HepG2 (cell line): ENCODE measurements at regions of chr3 and their contacts with region 1.

Region 1: DNA sequence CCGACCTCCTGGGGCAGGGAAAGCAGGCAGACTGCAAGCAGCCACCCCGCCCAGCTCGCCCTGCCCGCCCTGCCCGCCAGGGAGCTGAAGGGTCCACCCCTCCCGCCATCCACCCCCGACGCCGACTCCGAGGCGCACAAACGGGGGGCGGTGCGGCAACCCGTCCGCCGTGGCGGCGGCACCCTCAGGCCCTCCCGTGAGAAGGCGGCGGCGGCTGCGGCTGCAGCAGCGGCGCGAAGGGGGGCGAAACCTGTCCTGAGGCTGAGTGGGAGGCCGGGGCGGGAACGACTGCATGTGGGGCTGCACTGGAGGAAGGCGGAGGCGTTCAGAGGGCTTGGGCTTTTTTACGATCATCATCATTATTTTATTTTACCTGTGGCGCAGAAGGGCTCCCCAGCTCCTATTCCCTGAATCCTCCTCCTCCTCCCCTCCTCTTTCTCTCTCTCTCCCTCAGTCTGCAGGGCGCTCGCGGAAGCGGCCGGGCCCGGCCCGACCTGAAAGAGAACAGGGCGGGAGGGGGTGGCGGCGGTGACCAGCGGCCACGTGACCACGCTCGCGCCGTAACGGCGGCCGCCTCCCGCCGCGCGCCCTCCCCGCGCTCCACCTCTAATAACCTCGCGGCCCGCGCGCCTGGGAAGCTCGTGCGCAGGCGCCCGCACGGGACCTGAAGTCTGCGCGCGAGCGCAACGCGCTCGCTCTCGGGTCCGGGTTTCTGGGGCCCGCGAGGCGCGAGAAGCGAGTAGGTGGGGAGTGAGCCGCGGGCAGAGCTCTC is at the start of gene TBC1D5:
- DNase-seq: peak; percentile 94
- ATAC-seq: peak; percentile 88
- H3K4me3 ChIP-seq: peak within 1 kb of the TSS; percentile 79 to 88 (median 79)
- H3K27ac ChIP-seq: peak within 1 kb of the TSS; percentile 98
- H3K4me1 ChIP-seq: peaks cover 60% of the 10 kb centered on the region
- H3K27me3 ChIP-seq: no peaks in the 10 kb centered on the region; a peak in 1 of 5 replicates
- CTCF ChIP-seq: no peak; the same call in 1 of the 2 replicates
- EP300 ChIP-seq: 0 out of 4 replicates have a peak, but pooled peaks of 1 of the 2 experiments have one; percentile 11
- POLR2A ChIP-seq: peak; percentile 78
- RAD21 ChIP-seq: peak; percentile 27; the same call in 1 of the 2 replicates
- total RNA-seq, gene TBC1D5: 33.3 and 50.5 TPM in 2 replicates

Region 2: GRCh38 chr3:17515445-17516234 is 226.7 kb before region 1 on chr3:
- CTCF ChIA-PET with region 1: no interaction called
- POLR2A ChIA-PET with region 1: no interaction called
- in situ Hi-C with region 1: no loop called
- intact Hi-C with region 1: loop called (anchors 1 kb)
- DNase-seq: no peak
- ATAC-seq: no peak
- H3K4me3 ChIP-seq: no peak overlapping the region
- H3K27ac ChIP-seq: no peak overlapping the region
- H3K4me1 ChIP-seq: no peaks in the 10 kb centered on the region
- H3K27me3 ChIP-seq: no peaks in the 10 kb centered on the region
- CTCF ChIP-seq: no peak
- EP300 ChIP-seq: no peak
- POLR2A ChIP-seq: no peak
- RAD21 ChIP-seq: no peak

Region 3: DNA sequence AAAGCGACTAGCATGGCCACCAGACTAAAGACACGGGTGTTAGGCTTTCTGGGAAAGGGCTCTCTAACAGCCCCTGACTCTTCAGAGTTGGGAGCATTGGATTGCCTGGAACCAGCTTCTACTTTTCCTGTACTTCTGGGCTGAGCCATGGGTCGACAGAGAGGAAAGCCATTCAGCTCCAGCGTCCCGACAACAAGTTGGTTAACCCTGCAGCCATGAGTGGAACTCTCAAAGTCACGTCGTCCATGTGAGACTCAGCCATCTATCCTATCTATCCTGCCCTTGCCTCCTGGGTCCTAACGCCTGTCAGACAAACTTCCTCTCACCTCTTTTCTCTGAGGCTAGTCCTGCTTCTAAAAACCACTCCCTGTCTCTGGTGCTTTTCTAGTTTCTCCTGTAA is 32.8 kb after region 1 on chr3:
- CTCF ChIA-PET with region 1: no interaction called
- POLR2A ChIA-PET with region 1: interaction called, 3 read pairs
- in situ Hi-C with region 1: no loop called
- intact Hi-C with region 1: loop called (anchors 1 kb)
- DNase-seq: no peak
- ATAC-seq: no peak
- H3K4me3 ChIP-seq: peak overlapping the region in 2 of 3 experiments; percentile 25 to 29; a peak in 3 of 6 replicates
- H3K27ac ChIP-seq: no peak overlapping the region
- H3K4me1 ChIP-seq: 0 out of 2 replicates have a peak, but pooled peaks cover 6% of the 10 kb centered on the region
- H3K27me3 ChIP-seq: no peaks in the 10 kb centered on the region; a peak in 1 of 5 replicates
- CTCF ChIP-seq: no peak
- EP300 ChIP-seq: no peak
- POLR2A ChIP-seq: peak in 1 of 2 experiments; percentile 51; a peak in 2 of 4 replicates
- RAD21 ChIP-seq: no peak

Region 4: GRCh38 chr3:17861476-17861875 is 119.2 kb after region 1 on chr3:
- CTCF ChIA-PET with region 1: no interaction called
- POLR2A ChIA-PET with region 1: no interaction called
- in situ Hi-C with region 1: no loop called
- intact Hi-C with region 1: no loop called
- DNase-seq: no peak
- ATAC-seq: no peak
- H3K4me3 ChIP-seq: no peak overlapping the region
- H3K27ac ChIP-seq: no peak overlapping the region
- H3K4me1 ChIP-seq: no peaks in the 10 kb centered on the region
- H3K27me3 ChIP-seq: no peaks in the 10 kb centered on the region
- CTCF ChIP-seq: no peak
- EP300 ChIP-seq: no peak
- POLR2A ChIP-seq: no peak
- RAD21 ChIP-seq: no peak

Region 5: DNA sequence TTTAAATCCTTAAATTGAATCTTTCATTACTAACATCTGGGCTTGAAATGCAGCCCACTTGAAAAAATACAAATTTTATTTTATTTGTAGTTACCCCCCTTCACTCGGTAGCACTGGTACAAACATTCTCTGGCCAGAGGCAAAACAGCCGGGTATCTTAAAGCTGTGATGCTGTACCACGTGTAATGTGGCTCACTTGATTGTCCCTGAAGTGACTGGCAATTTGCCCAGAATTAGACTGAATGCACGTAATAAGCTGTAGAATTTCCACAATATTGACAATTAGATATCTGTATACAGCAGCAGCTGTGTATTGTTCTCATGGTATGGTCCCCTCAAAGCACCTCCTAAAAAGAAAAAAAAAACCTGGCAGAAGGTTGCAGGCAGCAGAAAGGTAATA is 192.9 kb after region 1 on chr3:
- CTCF ChIA-PET with region 1: no interaction called
- POLR2A ChIA-PET with region 1: no interaction called
- in situ Hi-C with region 1: no loop called
- intact Hi-C with region 1: no loop called
- DNase-seq: no peak
- ATAC-seq: no peak
- H3K4me3 ChIP-seq: no peak overlapping the region
- H3K27ac ChIP-seq: no peak overlapping the region
- H3K4me1 ChIP-seq: no peaks in the 10 kb centered on the region
- H3K27me3 ChIP-seq: peaks cover 0 to 8% of the 10 kb centered on the region in 2 experiments; a peak in 1 of 5 replicates
- CTCF ChIP-seq: no peak
- EP300 ChIP-seq: no peak
- POLR2A ChIP-seq: no peak
- RAD21 ChIP-seq: no peak